Endothelial cell of umbilical vein (primary cell): ENCODE measurements at regions of chr19 and their contacts with region 1.

Region 1: DNA sequence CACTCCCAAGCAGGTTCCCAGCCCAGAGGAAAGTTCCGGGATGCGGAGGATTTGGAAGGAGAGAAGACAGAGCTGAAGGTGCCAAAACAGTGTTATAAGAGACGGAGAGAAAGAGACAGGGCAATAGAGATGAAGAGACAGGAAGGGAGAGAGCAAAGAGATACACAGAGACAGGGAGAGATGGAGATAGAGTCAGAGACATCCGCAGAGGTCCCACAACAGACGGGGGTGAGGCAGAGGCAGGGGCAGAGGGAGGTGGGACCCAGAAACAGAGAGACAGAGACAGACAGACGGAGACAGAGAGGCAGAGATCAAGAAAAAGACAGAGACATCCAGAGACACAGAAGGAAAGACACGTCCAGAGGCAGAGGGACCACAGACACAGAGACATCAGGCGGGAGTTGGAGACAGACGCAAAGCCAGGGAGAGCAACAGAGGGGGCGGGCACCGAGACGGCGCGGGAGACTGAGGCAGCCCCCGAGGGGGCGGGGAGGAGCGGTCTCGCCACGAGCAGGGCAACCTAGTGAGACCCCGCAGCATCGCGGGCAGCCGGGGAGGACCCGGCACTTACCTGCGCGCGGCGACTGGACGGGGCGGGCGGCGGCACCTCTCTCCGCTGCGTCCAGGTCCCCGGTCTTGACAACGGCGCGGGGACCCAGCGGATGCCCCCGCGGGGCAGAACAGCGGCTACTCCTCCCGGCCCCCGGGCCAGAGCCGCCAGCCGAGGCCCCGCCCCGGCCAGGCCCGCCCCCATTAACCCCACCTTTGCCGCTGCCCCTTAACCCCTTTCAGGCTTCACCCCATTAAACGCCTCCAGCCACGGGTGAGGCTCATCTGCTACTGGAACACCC is at the start of gene GPR4:
- DNase-seq: no peak
- H3K4me3 ChIP-seq: peak within 1 kb of the TSS; percentile 53 to 84 (median 80)
- H3K27ac ChIP-seq: peak within 1 kb of the TSS; percentile 9
- H3K4me1 ChIP-seq: peaks cover 52% of the 10 kb centered on the region
- H3K27me3 ChIP-seq: no peaks in the 10 kb centered on the region
- CTCF ChIP-seq: no peak
- POLR2A ChIP-seq: peak; percentile 59
- total RNA-seq, gene GPR4: 26.7 and 30.3 TPM in 2 replicates

Region 2: GRCh38 chr19:45455707-45456499 is 145.8 kb before region 1 on chr19:
- CTCF ChIA-PET with region 1: no interaction called
- POLR2A ChIA-PET with region 1: no interaction called
- dilution Hi-C with region 1: no loop called
- intact Hi-C with region 1: no loop called
- DNase-seq: peak; percentile 98
- H3K4me3 ChIP-seq: no peak overlapping the region
- H3K27ac ChIP-seq: peak overlapping the region; percentile 90
- H3K4me1 ChIP-seq: peaks cover 19% of the 10 kb centered on the region
- H3K27me3 ChIP-seq: no peaks in the 10 kb centered on the region
- CTCF ChIP-seq: no peak
- POLR2A ChIP-seq: no peak

Region 3: GRCh38 chr19:45591004-45591637 is 10.6 kb before region 1 on chr19:
- CTCF ChIA-PET with region 1: interaction called, 5 read pairs
- POLR2A ChIA-PET with region 1: no interaction called
- dilution Hi-C with region 1: no loop called
- intact Hi-C with region 1: loop called (anchors 1 kb)
- DNase-seq: no peak
- H3K4me3 ChIP-seq: no peak overlapping the region
- H3K27ac ChIP-seq: no peak overlapping the region
- H3K4me1 ChIP-seq: peaks cover 20% of the 10 kb centered on the region
- H3K27me3 ChIP-seq: no peaks in the 10 kb centered on the region
- CTCF ChIP-seq: peak; percentile 14 to 42
- POLR2A ChIP-seq: no peak

Region 4: GRCh38 chr19:46090444-46090843 is 488.7 kb after region 1 on chr19:
- CTCF ChIA-PET with region 1: no interaction called
- POLR2A ChIA-PET with region 1: no interaction called
- dilution Hi-C with region 1: no loop called
- intact Hi-C with region 1: no loop called
- DNase-seq: no peak
- H3K4me3 ChIP-seq: no peak overlapping the region
- H3K27ac ChIP-seq: no peak overlapping the region
- H3K4me1 ChIP-seq: no peaks in the 10 kb centered on the region
- H3K27me3 ChIP-seq: peaks cover 22 to 55% of the 10 kb centered on the region in 2 experiments
- CTCF ChIP-seq: no peak
- POLR2A ChIP-seq: no peak